ENCODE measurements at regions of chr1 and their contacts with region 1.

Region 1: GRCh38 chr1:54996359-54996868 is 2.3 kb upstream of the BSND start:
- DNase-seq: peak; percentile 70
- H3K4me3 Mint-ChIP-seq: peak overlapping the region; percentile 4
- H3K27ac Mint-ChIP-seq: no peak overlapping the region
- H3K4me1 Mint-ChIP-seq: peaks cover 16% of the 10 kb centered on the region
- H3K27me3 Mint-ChIP-seq: peaks cover 33% of the 10 kb centered on the region

Region 2: DNA sequence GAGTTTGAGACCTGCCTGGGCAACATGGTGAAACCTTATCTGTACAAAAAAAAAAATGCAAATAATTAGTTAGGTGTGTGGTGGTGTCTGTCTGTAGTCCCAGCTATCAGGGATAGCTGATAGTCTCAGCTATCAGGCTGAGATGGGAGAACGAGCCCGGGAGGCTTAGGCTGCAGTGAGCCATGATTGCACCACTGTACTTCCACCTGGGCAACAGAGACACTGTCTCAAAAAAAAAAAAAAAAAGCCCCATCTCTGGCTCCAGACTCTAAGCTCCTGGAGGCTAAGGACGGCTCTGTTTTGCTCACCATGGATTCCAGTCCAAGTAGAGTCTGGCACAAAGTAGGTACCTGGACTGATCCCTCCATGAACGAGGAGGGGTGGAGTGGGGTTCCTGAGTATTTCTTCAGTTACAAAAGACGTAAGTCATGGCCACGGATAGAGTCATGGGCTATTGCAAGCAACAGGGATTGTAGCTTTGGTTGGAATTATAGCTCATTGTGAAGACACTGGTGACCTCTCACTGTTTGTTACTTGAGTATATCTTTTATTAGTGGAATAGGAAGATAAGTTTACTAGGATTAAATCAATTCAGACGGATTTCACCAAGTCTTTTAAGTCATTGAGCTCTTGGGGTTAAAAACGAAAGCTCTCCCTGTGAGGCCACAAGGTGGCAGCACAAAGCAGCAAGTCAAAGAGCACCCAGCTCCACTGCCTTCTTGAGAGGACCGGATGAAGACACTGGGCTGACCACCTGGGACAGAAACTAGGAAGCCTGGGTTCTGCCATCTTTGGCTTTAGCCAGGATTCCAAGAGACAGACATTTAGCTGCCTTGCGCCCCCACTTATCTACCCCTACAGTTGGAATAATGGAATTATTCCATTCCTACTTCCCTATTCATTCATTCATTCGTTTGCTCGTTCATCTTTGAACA is 51.5 kb before region 1 on chr1:
- intact Hi-C with region 1: loop called (anchors 1 kb)
- DNase-seq: peak; percentile 60
- H3K4me3 Mint-ChIP-seq: no peak overlapping the region
- H3K27ac Mint-ChIP-seq: no peak overlapping the region
- H3K4me1 Mint-ChIP-seq: peaks cover 10% of the 10 kb centered on the region
- H3K27me3 Mint-ChIP-seq: peaks cover 8% of the 10 kb centered on the region

Region 3: GRCh38 chr1:54950369-54951163 is 45.8 kb before region 1 on chr1:
- intact Hi-C with region 1: loop called (anchors 1 kb)
- DNase-seq: peak; percentile 48
- H3K4me3 Mint-ChIP-seq: no peak overlapping the region
- H3K27ac Mint-ChIP-seq: no peak overlapping the region
- H3K4me1 Mint-ChIP-seq: peaks cover 7% of the 10 kb centered on the region
- H3K27me3 Mint-ChIP-seq: peaks cover 6% of the 10 kb centered on the region

Region 4: DNA sequence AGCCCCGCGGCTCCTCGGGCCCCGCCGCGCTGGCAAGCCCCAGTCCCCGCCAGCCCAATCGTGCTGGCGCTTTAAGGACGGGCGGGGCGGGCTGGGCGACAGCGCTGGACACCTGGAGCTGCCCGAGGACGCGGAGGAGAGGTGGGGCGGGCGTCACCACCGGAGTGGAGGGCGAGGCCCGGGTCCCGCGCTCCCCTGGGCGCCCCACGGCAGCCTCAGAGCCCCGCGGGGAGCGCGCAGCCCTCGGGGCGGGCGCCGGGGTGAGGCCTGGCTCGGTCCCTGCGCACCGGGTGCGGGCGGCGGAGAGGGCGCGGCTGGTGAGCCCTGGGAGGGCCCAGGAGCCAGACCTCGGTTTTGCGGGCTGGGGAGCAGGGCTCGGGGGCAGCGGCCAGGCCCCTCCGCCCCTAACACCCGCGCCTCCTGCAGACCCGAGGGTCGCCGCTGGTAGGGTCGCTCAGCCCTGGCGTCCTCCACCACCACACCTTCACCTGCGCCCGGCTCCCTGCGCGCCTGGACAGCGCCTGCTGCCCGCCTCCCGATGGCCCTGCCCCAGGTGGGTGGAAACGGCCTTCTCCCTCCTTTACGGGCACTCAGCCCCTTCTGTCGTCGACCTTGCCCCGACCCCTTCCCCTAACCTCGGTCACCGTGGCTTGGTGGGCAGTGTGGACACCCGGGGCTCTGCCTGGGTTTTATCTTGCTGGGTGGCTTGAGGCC is 15.7 kb before region 1 on chr1 and contains the start of gene TMEM61:
- intact Hi-C with region 1: no loop called
- DNase-seq: no peak
- H3K4me3 Mint-ChIP-seq: no peak within 1 kb of the TSS
- H3K27ac Mint-ChIP-seq: no peak within 1 kb of the TSS
- H3K4me1 Mint-ChIP-seq: no peaks in the 10 kb centered on the region
- H3K27me3 Mint-ChIP-seq: peaks cover 43% of the 10 kb centered on the region
- total RNA-seq, gene TMEM61: 0.16 TPM in 1 of 2 replicates, not detected in the other

Measured in activated T-helper 2 cell treated with anti-CD3 and anti-CD28 coated beads, Interferon-gamma antibody, Interleukin-2, Interleukin-4, amounts not matched to agents 10 μg/mL and 5 μg/mL and 100 μg/mL, durations not matched to agents 14 hours and 24 hours and 36 hours (primary cell).